HepG2 (cell line): ENCODE measurements at regions of chr17 and their contacts with region 1.

Region 1: DNA sequence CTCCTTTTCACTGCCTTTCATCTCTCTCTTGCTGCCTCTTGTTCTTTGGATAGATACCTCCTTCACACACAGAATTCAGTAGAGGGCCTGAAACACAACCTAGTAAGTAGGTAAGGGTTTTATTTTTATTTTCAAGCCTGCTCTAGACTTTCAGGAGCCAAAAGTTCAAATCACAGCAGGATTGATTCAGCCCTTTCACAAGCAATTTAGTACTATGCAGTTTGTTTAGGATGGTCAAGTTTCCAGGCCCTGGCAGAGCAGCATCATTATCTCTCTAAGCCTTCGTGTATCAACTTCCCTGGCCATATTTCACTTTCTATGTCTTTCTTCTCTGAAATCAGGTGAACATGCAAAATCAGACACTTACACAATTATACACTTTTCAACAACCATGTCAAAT is 148.8 kb upstream of the CORO6 start:
- DNase-seq: no peak
- ATAC-seq: no peak
- H3K4me3 ChIP-seq: no peak overlapping the region
- H3K27ac ChIP-seq: no peak overlapping the region
- H3K4me1 ChIP-seq: peaks cover 6% of the 10 kb centered on the region
- H3K27me3 ChIP-seq: no peaks in the 10 kb centered on the region
- CTCF ChIP-seq: no peak
- EP300 ChIP-seq: no peak
- POLR2A ChIP-seq: no peak
- RAD21 ChIP-seq: no peak

Region 2: GRCh38 chr17:29622337-29623282 is 148.9 kb before region 1 on chr17 and contains the start of gene CORO6:
- CTCF ChIA-PET with region 1: no interaction called
- POLR2A ChIA-PET with region 1: no interaction called
- in situ Hi-C with region 1: loop called (anchors 10 kb)
- intact Hi-C with region 1: no loop called
- DNase-seq: no peak
- ATAC-seq: peak; percentile 58
- H3K4me3 ChIP-seq: peak within 1 kb of the TSS; percentile 70 to 77 (median 75)
- H3K27ac ChIP-seq: no peak within 1 kb of the TSS
- H3K4me1 ChIP-seq: peaks cover 45% of the 10 kb centered on the region
- H3K27me3 ChIP-seq: peaks cover 4 to 41% of the 10 kb centered on the region in 2 experiments; a peak in 4 of 5 replicates
- CTCF ChIP-seq: no peak
- EP300 ChIP-seq: no peak
- POLR2A ChIP-seq: no peak
- RAD21 ChIP-seq: 0 out of 2 replicates have a peak, but pooled peaks have one; percentile 12
- total RNA-seq, gene CORO6: 0.42 TPM in 1 of 2 replicates, not detected in the other

Region 3: DNA sequence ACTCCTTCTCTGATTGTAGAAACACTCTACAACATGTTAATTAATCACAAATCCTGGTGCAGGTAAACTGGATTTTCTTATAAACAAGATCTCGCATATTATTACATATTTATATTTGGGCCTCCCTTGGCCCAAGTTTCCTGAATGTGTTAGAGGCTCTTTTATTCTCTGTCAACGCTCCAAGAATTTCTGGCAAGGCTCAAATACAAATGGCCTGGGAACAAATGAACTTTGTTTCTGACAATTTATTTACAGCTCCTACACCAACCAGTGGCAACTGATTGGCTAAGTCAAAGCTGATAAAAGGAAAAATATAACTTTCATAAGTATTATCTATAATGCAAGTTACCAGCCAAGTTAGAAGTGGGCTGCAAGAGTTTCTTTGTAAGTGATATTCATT is 84.0 kb before region 1 on chr17:
- CTCF ChIA-PET with region 1: no interaction called
- POLR2A ChIA-PET with region 1: no interaction called
- in situ Hi-C with region 1: no loop called
- intact Hi-C with region 1: no loop called
- DNase-seq: no peak
- ATAC-seq: no peak
- H3K4me3 ChIP-seq: no peak overlapping the region
- H3K27ac ChIP-seq: no peak overlapping the region
- H3K4me1 ChIP-seq: no peaks in the 10 kb centered on the region
- H3K27me3 ChIP-seq: no peaks in the 10 kb centered on the region
- CTCF ChIP-seq: no peak
- EP300 ChIP-seq: no peak
- POLR2A ChIP-seq: no peak
- RAD21 ChIP-seq: no peak